Right ventricle myocardium inferior (tissue), 1 donor: ENCODE measurements at regions of chr19 and their contacts with region 1.

Region 1: GRCh38 chr19:3970808-3971598 is at the start of gene DAPK3:
- DNase-seq: peak; percentile 97
- ATAC-seq: peak; percentile 88
- total RNA-seq, gene DAPK3: 67.5 TPM

Region 2: DNA sequence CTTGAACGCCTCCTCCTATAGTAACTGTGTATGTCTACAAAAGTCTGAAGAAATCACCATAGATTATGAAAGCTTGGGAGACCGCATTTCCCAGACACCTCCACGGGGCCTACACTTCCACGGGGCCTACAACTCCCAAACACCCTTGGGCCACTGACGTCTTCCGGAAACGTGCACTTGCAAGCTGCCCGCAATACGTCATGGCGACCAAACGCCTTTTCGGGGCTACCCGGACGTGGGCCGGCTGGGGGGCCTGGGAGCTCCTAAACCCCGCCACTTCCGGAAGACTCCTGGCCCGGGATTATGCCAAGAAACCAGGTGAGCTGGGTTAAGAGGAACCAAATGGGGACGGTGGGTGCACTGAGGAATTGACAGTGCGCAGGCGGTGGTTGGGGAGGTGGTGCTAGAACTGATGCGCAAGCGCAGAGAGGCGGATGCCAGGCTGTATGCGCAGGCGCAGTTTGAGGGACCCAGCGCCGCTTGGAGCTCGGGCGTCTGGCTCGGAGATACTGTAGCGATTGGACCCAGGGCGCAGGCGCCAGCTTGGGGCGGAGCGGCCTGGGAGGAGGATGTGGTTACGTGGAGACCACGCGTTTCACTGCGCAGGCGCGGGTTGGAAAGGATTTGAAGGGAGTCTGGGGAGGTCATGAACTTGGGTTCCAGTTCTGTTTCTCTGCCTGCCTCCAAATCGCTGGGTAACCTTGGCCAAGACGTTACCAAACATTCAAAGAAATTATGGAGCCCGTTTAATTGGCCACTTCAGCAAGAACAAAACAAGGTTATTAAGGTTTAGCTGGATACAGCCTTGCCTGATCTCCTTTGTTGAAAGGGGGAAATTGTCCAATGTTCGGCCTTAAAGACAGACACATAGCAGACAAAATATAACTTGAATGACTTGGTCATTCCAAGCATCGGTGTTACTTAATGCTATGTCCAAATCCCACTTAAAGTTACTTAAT is 208.2 kb before region 1 on chr19 and contains the start of gene MRPL54:
- intact Hi-C with region 1: loop called (anchors 10 kb)
- DNase-seq: peak; percentile 100
- ATAC-seq: peak; percentile 97
- total RNA-seq, gene MRPL54: 73.8 TPM

Region 3: DNA sequence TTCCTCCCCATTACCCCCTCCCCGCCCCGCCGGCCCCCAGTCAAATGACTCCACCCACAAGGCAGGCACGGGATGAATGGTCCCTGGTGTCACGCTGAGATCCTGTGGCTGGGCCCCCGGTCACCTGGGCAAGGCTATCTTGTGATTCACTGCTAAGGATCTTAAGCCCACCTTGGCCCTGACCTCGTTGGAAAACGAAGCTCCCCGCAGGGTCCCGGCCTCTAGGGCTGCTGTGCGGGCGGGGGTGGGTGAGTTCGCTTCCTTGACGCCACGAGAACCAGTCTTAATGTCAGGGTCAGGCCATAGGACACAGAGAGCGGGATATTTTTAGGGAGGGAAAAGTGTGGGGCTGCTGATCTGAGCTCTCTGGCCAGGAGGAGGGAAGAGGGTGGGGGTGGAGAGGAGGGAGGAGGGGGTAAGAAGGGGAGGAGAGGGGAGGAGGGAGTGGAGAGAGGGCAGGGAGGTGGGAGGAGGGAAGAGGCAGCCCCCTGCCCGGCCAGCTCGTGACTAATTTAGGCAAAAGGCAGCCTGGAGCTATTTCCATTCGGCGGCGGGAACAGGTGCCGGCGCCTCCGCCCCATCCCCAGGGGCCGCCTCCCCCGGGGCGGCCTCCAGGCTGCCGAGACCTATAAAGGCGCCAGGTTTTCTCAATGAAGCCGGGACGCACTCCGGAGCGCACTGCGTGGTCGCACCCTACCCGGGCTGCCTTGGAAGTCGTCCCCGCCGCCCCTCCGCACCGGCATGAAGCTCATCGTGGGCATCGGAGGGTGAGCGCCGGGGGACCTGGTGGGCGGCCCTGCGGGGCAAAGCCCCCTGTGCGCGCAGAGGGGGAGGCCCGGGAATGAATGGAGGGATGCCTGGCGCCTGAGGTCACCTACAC is 37.8 kb before region 1 on chr19 and contains the start of gene NMRK2:
- intact Hi-C with region 1: loop called (anchors 5 kb)
- DNase-seq: no peak
- ATAC-seq: peak; percentile 59
- total RNA-seq, gene NMRK2: 627 TPM